ENCODE measurements at regions of chr2 and their contacts with region 1.

Region 1: DNA sequence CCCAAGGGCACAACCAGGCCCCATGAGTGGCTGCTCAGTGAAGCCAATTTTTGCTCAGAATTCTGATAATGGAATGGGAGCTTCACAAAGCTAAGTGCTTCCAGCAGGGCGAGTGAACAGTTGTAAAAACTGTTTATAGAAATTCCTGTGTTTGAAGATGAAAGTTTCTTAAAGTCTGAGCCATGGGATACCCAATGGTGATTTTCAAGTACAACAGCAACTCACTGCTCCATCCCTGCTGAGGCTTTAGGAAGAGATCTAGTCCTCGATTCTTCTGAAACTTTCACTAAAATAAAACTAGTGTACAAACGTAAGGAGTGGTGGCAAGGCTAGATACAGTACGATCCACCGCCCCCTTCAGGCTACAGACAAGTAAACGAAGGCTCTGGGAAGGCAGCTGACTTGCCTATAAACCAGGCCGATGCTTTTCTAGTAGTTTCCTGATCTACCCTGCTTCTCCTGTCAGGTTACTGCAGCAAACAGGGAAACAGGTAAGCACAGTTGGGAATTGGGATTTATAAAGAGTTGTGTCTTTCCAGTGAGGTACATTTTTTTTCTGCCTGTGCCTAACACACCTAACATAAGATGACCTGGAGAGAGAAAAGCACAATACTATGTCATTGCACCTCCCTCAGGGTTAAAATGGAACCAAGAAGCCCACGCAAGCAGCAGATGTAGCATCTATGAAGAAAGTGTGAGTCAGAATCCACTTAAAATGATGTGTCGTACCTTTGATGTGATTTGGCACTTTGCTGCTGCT is 108.7 kb downstream of the UXS1 start:
- DNase-seq: peak; percentile 68 to 76 (median 73)
- H3K4me3 ChIP-seq: no peak overlapping the region
- H3K4me3 Mint-ChIP-seq: peak overlapping the region; percentile 28 to 90 (median 69)
- H3K27ac ChIP-seq: peak overlapping the region; percentile 42
- H3K27ac Mint-ChIP-seq: peak overlapping the region; percentile 87 to 98 (median 93)
- H3K4me1 ChIP-seq: peaks cover 63% of the 10 kb centered on the region
- H3K4me1 Mint-ChIP-seq: peaks cover 39 to 65% (median 55%) of the 10 kb centered on the region in 4 donors
- H3K27me3 ChIP-seq: no peaks in the 10 kb centered on the region
- H3K27me3 Mint-ChIP-seq: no peaks in the 10 kb centered on the region

Region 2: GRCh38 chr2:104538077-104538476 is 1547.3 kb before region 1 on chr2:
- CTCF ChIA-PET with region 1: no interaction called
- POLR2A ChIA-PET with region 1: no interaction called
- intact Hi-C with region 1: no loop called
- DNase-seq: no peak
- H3K4me3 ChIP-seq: no peak overlapping the region
- H3K4me3 Mint-ChIP-seq: no peak overlapping the region
- H3K27ac ChIP-seq: no peak overlapping the region
- H3K27ac Mint-ChIP-seq: no peak overlapping the region
- H3K4me1 ChIP-seq: no peaks in the 10 kb centered on the region
- H3K4me1 Mint-ChIP-seq: no peaks in the 10 kb centered on the region
- H3K27me3 ChIP-seq: no peaks in the 10 kb centered on the region
- H3K27me3 Mint-ChIP-seq: peaks cover 0 to 3% of the 10 kb centered on the region in 2 donors

Region 3: DNA sequence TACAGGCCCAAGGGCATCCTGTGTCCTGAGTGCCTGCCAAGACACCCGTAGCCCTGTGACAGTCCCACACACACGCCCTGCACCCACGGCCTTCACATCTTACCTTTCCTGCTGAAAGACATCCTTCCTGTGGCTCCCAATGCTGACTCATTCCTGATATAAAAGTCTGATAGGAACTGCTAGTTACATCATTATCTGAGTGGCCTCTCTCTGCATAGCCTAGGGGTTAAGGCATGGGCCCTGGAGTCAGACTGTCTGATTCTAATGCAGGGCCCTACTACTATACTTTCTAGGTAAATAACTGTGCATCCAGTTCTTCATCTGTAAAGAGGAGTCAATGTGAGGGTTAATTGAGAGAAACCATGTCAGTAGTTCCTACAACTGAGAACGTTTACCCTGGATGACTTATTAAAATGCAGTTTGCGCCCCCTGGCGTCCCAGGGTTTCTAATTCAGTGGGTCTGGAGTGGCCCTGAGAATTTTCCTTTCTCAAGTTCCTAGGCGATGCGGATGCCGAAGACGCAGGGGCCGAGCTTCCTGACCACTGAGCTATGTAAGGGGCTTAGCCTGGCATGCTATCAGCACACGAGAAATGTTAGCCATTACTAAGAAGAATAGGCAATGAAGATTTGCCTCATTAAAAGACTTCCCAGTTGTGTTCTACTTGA is 849.8 kb before region 1 on chr2:
- CTCF ChIA-PET with region 1: no interaction called
- POLR2A ChIA-PET with region 1: no interaction called
- intact Hi-C with region 1: no loop called
- DNase-seq: peak in 4 of 5 donors; percentile 20 to 29 (median 26)
- H3K4me3 ChIP-seq: no peak overlapping the region
- H3K4me3 Mint-ChIP-seq: peak overlapping the region in 1 of 8 donors; percentile 20
- H3K27ac ChIP-seq: no peak overlapping the region
- H3K27ac Mint-ChIP-seq: peak overlapping the region in 1 of 7 donors; percentile 82
- H3K4me1 ChIP-seq: peaks cover 12% of the 10 kb centered on the region
- H3K4me1 Mint-ChIP-seq: peaks cover 5 to 22% (median 13%) of the 10 kb centered on the region in 4 donors
- H3K27me3 ChIP-seq: no peaks in the 10 kb centered on the region
- H3K27me3 Mint-ChIP-seq: peaks cover 11% of the 10 kb centered on the region in 2 donors

Region 4: DNA sequence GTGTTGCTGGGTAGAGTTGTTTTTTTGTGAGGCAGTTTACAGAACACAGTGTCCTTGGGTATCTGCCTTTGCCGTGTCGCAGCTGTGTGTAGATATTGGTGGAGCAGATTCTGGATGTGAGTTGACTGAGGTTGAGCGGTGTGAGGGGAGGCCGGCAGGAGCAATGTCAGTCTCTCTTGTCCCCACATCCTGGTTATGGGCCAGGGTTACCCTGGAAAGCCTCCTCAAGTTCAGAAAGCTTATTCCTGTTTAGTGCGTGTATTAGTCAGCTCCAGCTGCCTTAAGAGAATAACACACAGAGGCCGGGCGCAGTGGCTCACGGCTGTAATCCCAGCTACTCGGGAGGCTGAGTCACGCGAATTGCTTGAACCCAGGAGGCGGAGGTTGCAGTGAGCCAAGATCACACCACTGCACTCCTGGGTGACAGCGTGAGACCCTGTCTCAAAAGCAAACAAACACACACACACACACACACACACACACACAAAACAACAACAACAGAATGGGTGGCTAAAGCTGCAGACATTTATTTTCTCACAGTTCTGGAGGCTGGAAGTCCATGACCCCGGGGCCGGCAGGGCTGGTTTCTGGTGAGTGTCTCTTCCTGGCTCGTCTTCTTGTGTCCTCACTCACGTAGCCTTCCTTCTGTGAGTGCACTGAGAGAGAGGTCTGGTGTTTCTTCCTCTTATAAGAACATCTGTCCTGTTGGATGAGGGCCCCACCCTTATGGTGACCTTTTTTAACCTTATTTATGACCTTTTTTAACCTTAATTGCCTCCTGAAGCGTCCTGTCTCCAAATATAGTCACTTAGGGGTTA is 335.6 kb before region 1 on chr2:
- CTCF ChIA-PET with region 1: interaction called, 13 read pairs
- POLR2A ChIA-PET with region 1: interaction called, 22 read pairs
- intact Hi-C with region 1: loop called (anchors 1 kb)
- DNase-seq: peak in 3 of 5 donors; percentile 32 to 63 (median 37)
- H3K4me3 ChIP-seq: peak overlapping the region; percentile 21 to 48
- H3K4me3 Mint-ChIP-seq: peak overlapping the region; percentile 88 to 99 (median 92)
- H3K27ac ChIP-seq: peak overlapping the region; percentile 78
- H3K27ac Mint-ChIP-seq: peak overlapping the region; percentile 92 to 99 (median 97)
- H3K4me1 ChIP-seq: peaks cover 81% of the 10 kb centered on the region
- H3K4me1 Mint-ChIP-seq: peaks cover 60 to 93% (median 75%) of the 10 kb centered on the region in 4 donors
- H3K27me3 ChIP-seq: no peaks in the 10 kb centered on the region
- H3K27me3 Mint-ChIP-seq: no peaks in the 10 kb centered on the region

Region 5: DNA sequence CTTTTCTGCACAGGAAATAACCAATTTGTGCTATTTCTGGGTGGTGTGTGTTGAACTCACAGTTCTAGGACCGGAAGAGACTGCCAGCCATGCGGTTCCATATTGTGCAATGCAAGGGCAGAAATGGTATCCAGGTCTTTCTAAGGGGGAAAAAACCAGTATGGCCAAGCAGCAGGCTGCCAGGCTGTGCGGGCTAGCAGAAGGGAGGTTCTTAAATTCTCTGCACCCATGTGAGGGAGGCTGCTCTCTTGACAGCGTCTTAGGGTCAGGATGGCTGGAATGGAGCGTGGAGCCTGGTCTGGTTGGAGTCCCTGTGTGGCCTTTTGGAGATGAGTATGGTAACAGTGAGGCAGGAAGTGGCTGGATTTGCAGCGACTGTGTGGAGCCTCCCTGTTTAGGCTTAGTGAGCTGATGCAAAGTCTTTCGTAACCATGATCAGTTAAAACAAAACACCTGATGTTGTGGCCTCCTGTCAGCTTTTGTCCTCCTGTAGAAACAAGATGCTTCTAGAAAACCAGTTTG is 288.0 kb before region 1 on chr2:
- CTCF ChIA-PET with region 1: interaction called, 83 read pairs
- POLR2A ChIA-PET with region 1: interaction called, 19 read pairs
- intact Hi-C with region 1: no loop called
- DNase-seq: peak in 4 of 5 donors; percentile 53 to 67 (median 58)
- H3K4me3 ChIP-seq: peak overlapping the region; percentile 1 to 33
- H3K4me3 Mint-ChIP-seq: peak overlapping the region; percentile 74 to 88 (median 82)
- H3K27ac ChIP-seq: peak overlapping the region; percentile 74
- H3K27ac Mint-ChIP-seq: peak overlapping the region; percentile 86 to 98 (median 95)
- H3K4me1 ChIP-seq: peaks cover 99% of the 10 kb centered on the region
- H3K4me1 Mint-ChIP-seq: peaks cover 82 to 95% (median 88%) of the 10 kb centered on the region in 4 donors
- H3K27me3 ChIP-seq: no peaks in the 10 kb centered on the region
- H3K27me3 Mint-ChIP-seq: no peaks in the 10 kb centered on the region

Region 6: DNA sequence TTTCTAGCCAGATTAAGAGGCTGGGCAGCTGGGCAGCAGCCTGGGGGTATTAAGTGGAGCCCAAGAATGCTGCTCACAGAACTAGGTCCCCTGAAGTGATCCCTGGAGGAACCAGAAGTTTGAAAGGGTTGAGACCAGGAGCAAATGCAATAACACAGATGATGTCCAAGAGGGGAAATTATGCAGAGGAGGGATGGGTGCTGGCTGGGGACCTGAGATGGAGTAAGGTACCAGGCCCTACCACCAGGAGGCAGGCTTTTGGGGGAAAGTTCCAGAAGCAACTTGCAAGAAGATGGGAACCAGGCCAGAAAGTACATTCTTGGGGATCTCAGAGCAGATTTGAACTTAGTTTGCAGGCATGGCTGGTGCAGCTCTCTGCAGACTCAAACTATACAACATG is 165.5 kb before region 1 on chr2:
- CTCF ChIA-PET with region 1: interaction called, 71 read pairs
- POLR2A ChIA-PET with region 1: interaction called, 4 read pairs
- intact Hi-C with region 1: loop called (anchors 1 kb)
- DNase-seq: peak; percentile 46 to 57 (median 54)
- H3K4me3 ChIP-seq: no peak overlapping the region
- H3K4me3 Mint-ChIP-seq: no peak overlapping the region
- H3K27ac ChIP-seq: no peak overlapping the region
- H3K27ac Mint-ChIP-seq: no peak overlapping the region
- H3K4me1 ChIP-seq: peaks cover 9% of the 10 kb centered on the region
- H3K4me1 Mint-ChIP-seq: peaks cover 22 to 39% (median 34%) of the 10 kb centered on the region in 4 donors
- H3K27me3 ChIP-seq: no peaks in the 10 kb centered on the region
- H3K27me3 Mint-ChIP-seq: no peaks in the 10 kb centered on the region

Region 7: DNA sequence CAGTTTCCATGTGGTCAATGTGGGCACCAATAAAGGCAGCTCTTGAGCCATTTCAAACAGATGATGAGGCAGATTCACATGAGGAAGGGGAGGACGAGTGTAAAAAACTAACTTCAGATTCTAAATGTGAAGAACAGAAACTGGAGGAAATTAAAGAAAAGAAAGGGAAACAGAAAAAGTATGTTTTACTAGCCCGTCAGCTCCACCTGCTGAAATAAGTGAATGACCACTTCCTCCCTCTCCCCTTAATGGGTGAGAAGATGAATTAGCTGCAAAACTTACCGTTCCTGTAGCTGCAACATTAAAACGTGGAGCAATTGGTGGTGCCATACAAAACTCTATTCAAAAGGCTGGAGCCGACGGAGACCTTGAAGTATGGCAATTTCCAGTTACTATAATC is 94.7 kb before region 1 on chr2:
- CTCF ChIA-PET with region 1: no interaction called
- POLR2A ChIA-PET with region 1: no interaction called
- intact Hi-C with region 1: loop called (anchors 5 kb)
- DNase-seq: no peak
- H3K4me3 ChIP-seq: no peak overlapping the region
- H3K4me3 Mint-ChIP-seq: peak overlapping the region in 2 of 8 donors; percentile 3 to 66
- H3K27ac ChIP-seq: no peak overlapping the region
- H3K27ac Mint-ChIP-seq: no peak overlapping the region
- H3K4me1 ChIP-seq: peaks cover 29% of the 10 kb centered on the region
- H3K4me1 Mint-ChIP-seq: peaks cover 19 to 57% (median 42%) of the 10 kb centered on the region in 4 donors
- H3K27me3 ChIP-seq: no peaks in the 10 kb centered on the region
- H3K27me3 Mint-ChIP-seq: no peaks in the 10 kb centered on the region

Region 8: GRCh38 chr2:106062627-106063026 is 22.7 kb before region 1 on chr2:
- CTCF ChIA-PET with region 1: interaction called, 11 read pairs
- POLR2A ChIA-PET with region 1: interaction called, 10 read pairs
- intact Hi-C with region 1: no loop called
- DNase-seq: no peak
- H3K4me3 ChIP-seq: no peak overlapping the region
- H3K4me3 Mint-ChIP-seq: peak overlapping the region in 1 of 8 donors; percentile 1
- H3K27ac ChIP-seq: no peak overlapping the region
- H3K27ac Mint-ChIP-seq: peak overlapping the region in 1 of 7 donors; percentile 57
- H3K4me1 ChIP-seq: peaks cover 42% of the 10 kb centered on the region
- H3K4me1 Mint-ChIP-seq: peaks cover 29 to 51% (median 33%) of the 10 kb centered on the region in 4 donors
- H3K27me3 ChIP-seq: no peaks in the 10 kb centered on the region
- H3K27me3 Mint-ChIP-seq: peaks cover 2 to 8% of the 10 kb centered on the region in 2 donors